CD4-positive, alpha-beta memory T cell (primary cell): ENCODE measurements at regions of chr20 and their contacts with region 1.

Region 1: DNA sequence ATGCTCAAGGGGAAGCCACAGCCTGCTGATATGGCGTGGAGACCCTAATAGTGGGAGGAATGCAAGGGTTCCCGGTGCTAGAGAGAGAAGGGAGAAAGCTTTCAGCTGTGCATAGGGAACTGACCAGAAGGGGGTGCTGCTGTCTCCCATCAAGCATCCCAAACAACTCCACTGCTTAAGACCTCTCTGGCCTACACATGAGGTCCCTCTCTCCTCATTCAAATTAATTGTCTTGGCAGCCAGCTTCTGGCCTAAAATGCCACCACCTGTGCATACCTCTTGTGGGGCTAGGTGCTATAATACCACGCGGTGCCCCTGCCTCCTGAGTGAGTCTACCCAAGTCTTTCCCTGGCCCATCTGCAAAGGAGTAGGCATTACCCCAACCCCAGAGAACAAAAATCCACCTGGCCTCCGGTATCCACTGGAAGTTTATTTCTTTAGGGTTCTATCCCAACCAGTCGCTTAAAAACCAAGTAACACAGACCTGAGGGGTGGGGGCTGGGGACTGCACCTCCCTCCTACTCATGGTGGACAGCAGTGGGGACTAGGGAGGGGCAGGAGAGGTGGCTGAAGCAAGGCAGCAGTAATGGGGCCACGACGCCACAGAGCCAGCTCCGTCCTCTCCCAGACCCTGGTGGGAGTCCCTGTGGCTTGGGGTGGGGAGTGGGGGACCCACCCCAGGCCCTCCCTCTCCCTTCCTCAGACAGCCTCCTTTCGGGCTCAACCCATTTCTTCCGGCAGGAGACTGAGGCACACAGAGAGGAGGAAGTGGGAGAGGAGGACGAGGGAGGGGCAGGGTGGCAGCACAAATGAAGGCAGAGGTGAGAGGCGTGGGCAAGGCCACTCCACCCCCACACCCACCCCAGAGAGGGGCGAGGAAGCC is 14.2 kb downstream of the ADISSP start:
- DNase-seq: peak; percentile 51 to 61 (median 57)
- H3K4me3 ChIP-seq: no peak overlapping the region
- H3K4me3 Mint-ChIP-seq: peak overlapping the region in 1 of 8 donors; percentile 17
- H3K27ac ChIP-seq: no peak overlapping the region
- H3K27ac Mint-ChIP-seq: peak overlapping the region in 4 of 7 donors; percentile 53 to 84 (median 66)
- H3K4me1 ChIP-seq: no peaks in the 10 kb centered on the region
- H3K4me1 Mint-ChIP-seq: peaks cover 2 to 14% (median 12%) of the 10 kb centered on the region in 4 donors
- H3K27me3 ChIP-seq: no peaks in the 10 kb centered on the region
- H3K27me3 Mint-ChIP-seq: peaks cover 0 to 2% of the 10 kb centered on the region in 2 donors

Region 2: GRCh38 chr20:2051946-2052345 is 1701.4 kb before region 1 on chr20:
- CTCF ChIA-PET with region 1: no interaction called
- POLR2A ChIA-PET with region 1: no interaction called
- intact Hi-C with region 1: no loop called
- DNase-seq: no peak
- H3K4me3 ChIP-seq: no peak overlapping the region
- H3K4me3 Mint-ChIP-seq: no peak overlapping the region
- H3K27ac ChIP-seq: no peak overlapping the region
- H3K27ac Mint-ChIP-seq: peak overlapping the region in 1 of 7 donors; percentile 7
- H3K4me1 ChIP-seq: no peaks in the 10 kb centered on the region
- H3K4me1 Mint-ChIP-seq: no peaks in the 10 kb centered on the region
- H3K27me3 ChIP-seq: no peaks in the 10 kb centered on the region
- H3K27me3 Mint-ChIP-seq: peaks cover 17 to 36% of the 10 kb centered on the region in 2 donors

Region 3: DNA sequence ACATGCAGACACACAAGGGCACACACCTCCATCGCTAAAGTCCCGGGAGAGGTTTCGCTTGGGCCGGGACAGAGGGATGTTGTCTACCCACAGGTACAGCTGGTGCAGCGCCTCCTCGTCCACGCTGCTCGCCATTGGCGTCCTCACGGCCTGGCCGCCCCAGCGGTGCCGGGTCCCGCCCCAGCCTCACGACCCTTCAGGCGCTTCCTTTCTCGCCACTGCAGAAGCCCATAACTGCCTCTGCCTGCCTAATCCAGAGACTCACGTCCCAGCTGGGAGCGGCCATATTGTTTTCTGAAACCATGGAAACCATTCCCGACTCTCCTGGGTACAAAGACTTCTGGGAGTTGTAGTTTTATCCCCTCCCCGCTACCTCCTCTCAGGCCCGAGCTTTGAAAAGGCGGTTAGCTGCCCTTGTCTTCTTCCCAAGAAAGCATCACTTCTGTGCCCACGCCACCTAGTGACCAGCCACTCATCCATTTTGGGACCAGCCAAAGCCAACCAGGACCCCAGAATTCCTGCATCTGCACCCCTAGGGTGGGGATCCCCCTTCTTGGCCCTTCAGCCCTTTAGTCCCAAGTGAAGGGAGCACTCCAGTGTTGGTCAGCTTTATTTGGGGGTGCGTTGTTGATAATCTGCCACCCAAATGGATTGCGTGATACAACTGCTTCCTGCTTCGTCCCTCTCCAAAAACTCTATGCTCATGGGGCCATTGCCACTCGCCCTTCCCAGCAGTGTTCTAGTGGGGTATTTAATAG is 28.0 kb after region 1 on chr20 and contains the start of gene SPEF1:
- CTCF ChIA-PET with region 1: interaction called, 3 read pairs
- POLR2A ChIA-PET with region 1: interaction called, 3 read pairs
- intact Hi-C with region 1: loop called (anchors 1 kb)
- DNase-seq: peak; percentile 57 to 67 (median 64)
- H3K4me3 ChIP-seq: peak within 1 kb of the TSS in 1 of 2 donors; percentile 18
- H3K4me3 Mint-ChIP-seq: peak within 1 kb of the TSS; percentile 35 to 82 (median 78)
- H3K27ac ChIP-seq: peak within 1 kb of the TSS; percentile 31
- H3K27ac Mint-ChIP-seq: peak within 1 kb of the TSS; percentile 5 to 91 (median 78)
- H3K4me1 ChIP-seq: peaks cover 52% of the 10 kb centered on the region
- H3K4me1 Mint-ChIP-seq: peaks cover 26 to 61% (median 43%) of the 10 kb centered on the region in 4 donors
- H3K27me3 ChIP-seq: no peaks in the 10 kb centered on the region
- H3K27me3 Mint-ChIP-seq: peaks cover 1% of the 10 kb centered on the region in 2 donors
- total RNA-seq, gene SPEF1: not detected

Region 4: DNA sequence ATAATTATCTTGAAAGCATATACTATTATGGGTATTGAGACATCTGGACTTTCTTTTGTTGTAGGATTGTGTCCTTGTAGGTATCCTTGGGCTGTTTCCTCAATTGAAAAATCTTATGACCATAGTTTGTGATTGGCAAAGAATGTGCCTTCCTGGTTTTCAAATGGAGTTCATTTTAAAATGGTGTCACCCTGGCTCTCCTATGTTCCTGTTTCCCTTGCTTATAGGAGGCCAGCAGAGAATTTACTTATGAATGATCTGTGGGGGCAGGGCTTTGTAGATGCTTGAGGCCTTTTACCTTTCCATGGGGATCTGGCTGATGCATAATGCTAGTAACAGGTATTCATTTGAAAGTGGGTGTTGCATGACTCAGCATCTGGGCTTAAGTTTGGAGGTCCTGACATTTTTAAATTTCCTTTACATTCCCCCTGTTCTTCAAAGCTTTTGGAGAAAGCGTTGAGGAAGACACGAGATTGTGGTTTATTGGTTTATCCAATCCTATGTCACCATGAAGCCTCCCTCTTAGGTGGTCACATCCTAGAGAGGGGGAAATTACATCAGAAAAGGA is 1698.4 kb after region 1 on chr20:
- CTCF ChIA-PET with region 1: no interaction called
- POLR2A ChIA-PET with region 1: no interaction called
- intact Hi-C with region 1: no loop called
- DNase-seq: no peak
- H3K4me3 ChIP-seq: no peak overlapping the region
- H3K4me3 Mint-ChIP-seq: no peak overlapping the region
- H3K27ac ChIP-seq: no peak overlapping the region
- H3K27ac Mint-ChIP-seq: no peak overlapping the region
- H3K4me1 ChIP-seq: no peaks in the 10 kb centered on the region
- H3K4me1 Mint-ChIP-seq: peaks cover 0 to 2% (median 0%) of the 10 kb centered on the region in 4 donors
- H3K27me3 ChIP-seq: no peaks in the 10 kb centered on the region
- H3K27me3 Mint-ChIP-seq: peaks cover 15 to 22% of the 10 kb centered on the region in 2 donors